Activated naive CD4-positive, alpha-beta T cell treated with anti-CD3 and anti-CD28 coated beads for 36 hours (primary cell): ENCODE measurements at regions of chr14 and their contacts with region 1.

Region 1: DNA sequence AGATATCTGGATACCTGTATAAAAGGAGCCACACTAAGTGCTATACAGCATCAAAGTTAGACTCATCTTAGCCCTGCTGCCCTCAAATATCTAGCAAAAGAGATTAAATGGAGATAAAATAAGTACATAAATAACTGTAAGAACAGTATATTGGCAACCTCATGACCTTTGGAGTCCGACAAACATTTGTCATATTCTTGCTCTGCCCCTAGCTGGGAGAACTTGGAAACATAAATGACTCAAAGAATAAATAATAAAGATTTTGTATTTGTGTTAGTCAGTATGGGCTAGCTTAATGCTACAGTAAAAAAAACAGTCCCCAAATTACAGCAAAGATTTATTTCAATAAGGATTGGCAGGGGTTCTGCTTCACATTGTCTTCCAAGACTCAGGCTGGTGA is 220.8 kb downstream of the EGLN3 start:
- DNase-seq: no peak
- H3K4me3 Mint-ChIP-seq: no peak overlapping the region
- H3K27ac Mint-ChIP-seq: no peak overlapping the region
- H3K4me1 Mint-ChIP-seq: peaks cover 8% of the 10 kb centered on the region
- H3K27me3 Mint-ChIP-seq: no peaks in the 10 kb centered on the region

Region 2: GRCh38 chr14:33570694-33571310 is 159.3 kb before region 1 on chr14:
- CTCF ChIA-PET with region 1: no interaction called
- intact Hi-C with region 1: no loop called
- DNase-seq: no peak
- H3K4me3 Mint-ChIP-seq: no peak overlapping the region
- H3K27ac Mint-ChIP-seq: no peak overlapping the region
- H3K4me1 Mint-ChIP-seq: no peaks in the 10 kb centered on the region
- H3K27me3 Mint-ChIP-seq: peaks cover 1% of the 10 kb centered on the region

Region 3: GRCh38 chr14:33675415-33676130 is 54.5 kb before region 1 on chr14:
- CTCF ChIA-PET with region 1: no interaction called
- intact Hi-C with region 1: loop called (anchors 2 kb)
- DNase-seq: no peak
- H3K4me3 Mint-ChIP-seq: no peak overlapping the region
- H3K27ac Mint-ChIP-seq: no peak overlapping the region
- H3K4me1 Mint-ChIP-seq: no peaks in the 10 kb centered on the region
- H3K27me3 Mint-ChIP-seq: peaks cover 2% of the 10 kb centered on the region

Region 4: GRCh38 chr14:33714527-33715222 is 15.4 kb before region 1 on chr14:
- CTCF ChIA-PET with region 1: no interaction called
- intact Hi-C with region 1: no loop called
- DNase-seq: no peak
- H3K4me3 Mint-ChIP-seq: no peak overlapping the region
- H3K27ac Mint-ChIP-seq: no peak overlapping the region
- H3K4me1 Mint-ChIP-seq: no peaks in the 10 kb centered on the region
- H3K27me3 Mint-ChIP-seq: peaks cover 2% of the 10 kb centered on the region